Mammary epithelial cell (primary cell): ENCODE measurements at regions of chr2 and their contacts with region 1.

Region 1: GRCh38 chr2:62334440-62335058 is 138.6 kb downstream of the B3GNT2 start:
- DNase-seq: no peak
- H3K4me3 ChIP-seq: no peak overlapping the region
- H3K27ac ChIP-seq: no peak overlapping the region
- H3K4me1 ChIP-seq: no peaks in the 10 kb centered on the region
- H3K27me3 ChIP-seq: no peaks in the 10 kb centered on the region
- CTCF ChIP-seq: no peak

Region 2: DNA sequence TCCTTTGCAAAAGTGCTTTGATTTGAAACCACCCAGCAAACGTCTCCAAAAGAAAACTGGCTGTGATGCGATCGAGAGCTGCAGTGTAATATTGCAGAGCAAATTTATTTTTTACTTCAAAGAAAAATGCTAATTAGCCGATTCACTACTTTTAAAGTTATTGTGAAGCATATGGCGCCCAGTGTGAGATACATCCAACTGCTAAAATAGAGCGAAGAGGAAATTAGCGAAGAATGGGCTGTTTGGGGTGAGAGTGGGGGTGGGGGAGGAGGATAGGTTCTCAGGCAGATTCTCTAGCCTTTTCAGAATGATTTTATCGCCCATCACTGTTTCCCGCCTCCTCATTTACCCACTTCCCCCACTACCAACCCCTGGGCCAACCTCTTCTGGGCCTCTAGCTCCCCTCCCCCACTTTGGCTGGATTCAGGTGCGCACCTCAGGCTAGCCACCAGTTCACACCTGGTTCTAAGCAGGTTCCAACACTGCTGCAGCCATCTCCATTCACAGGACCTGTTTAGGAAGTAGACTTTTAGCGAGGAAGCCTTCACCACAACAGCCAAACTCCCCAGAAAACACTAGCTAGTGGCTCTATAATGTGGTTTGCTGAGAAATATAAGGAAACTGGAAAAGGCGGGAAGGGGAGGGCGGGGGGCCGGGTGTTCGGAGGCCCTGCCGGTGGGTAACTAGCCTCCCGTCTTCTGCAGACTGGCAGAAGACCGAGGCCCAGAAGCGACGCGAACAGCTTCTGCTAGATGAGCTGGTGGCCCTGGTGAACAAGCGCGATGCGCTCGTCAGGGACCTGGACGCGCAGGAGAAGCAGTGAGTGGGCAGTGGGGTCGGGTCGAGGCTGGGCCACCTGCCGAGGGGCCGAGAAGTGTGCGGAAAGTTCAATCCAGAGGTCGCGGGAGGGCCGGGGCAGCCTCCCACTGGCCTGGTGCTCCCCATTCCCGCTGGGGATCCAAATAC is 710.1 kb after region 1 on chr2:
- CTCF ChIA-PET with region 1: interaction called, 14 read pairs
- dilution Hi-C with region 1: no loop called
- in situ Hi-C with region 1: no loop called
- intact Hi-C with region 1: no loop called
- DNase-seq: no peak
- H3K4me3 ChIP-seq: no peak overlapping the region
- H3K27ac ChIP-seq: no peak overlapping the region
- H3K4me1 ChIP-seq: peaks cover 8% of the 10 kb centered on the region
- H3K27me3 ChIP-seq: no peaks in the 10 kb centered on the region
- CTCF ChIP-seq: no peak